HepG2 (cell line): ENCODE measurements at regions of chr7 and their contacts with region 1.

Region 1: DNA sequence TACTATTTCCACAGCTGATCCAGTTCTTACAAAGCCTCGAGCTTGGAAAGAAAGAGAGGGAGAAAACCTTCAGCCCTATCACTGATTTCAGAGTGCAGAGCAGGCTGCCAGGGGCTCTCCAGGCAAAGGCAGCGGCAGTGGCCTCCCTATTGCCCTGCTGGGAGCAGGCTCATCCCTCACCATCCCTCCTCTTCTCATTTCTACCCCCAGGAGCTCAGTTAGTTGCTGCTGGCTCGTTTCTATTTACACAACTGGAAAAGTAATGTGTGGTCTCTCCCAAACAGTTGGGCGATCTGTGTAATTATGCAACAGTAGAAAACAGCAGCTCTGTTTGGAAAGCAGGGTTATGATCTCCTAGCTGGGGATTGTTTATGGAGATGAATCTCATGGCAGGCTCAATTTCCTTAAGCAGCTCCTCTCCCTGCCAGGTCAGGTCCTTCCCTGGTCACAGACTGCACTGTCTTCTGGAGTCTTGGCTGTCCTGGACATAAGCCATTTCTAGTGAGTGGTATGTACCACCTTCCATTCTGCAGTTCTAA is 28.7 kb upstream of the TNS3 start:
- DNase-seq: peak; percentile 85
- ATAC-seq: peak; percentile 80
- H3K4me3 ChIP-seq: peak overlapping the region; percentile 34 to 59 (median 38)
- H3K27ac ChIP-seq: peak overlapping the region; percentile 71
- H3K4me1 ChIP-seq: peaks cover 61% of the 10 kb centered on the region
- H3K27me3 ChIP-seq: no peaks in the 10 kb centered on the region
- CTCF ChIP-seq: no peak
- EP300 ChIP-seq: peak in 1 of 2 experiments; percentile 60; a peak in 2 of 4 replicates
- POLR2A ChIP-seq: 0 out of 4 replicates have a peak, but pooled peaks of 1 of the 2 experiments have one; percentile 23
- RAD21 ChIP-seq: no peak

Region 2: GRCh38 chr7:47571331-47572093 is 39.1 kb before region 1 on chr7:
- CTCF ChIA-PET with region 1: no interaction called
- POLR2A ChIA-PET with region 1: interaction called, 25 read pairs
- in situ Hi-C with region 1: no loop called
- intact Hi-C with region 1: loop called (anchors 2 kb)
- DNase-seq: peak; percentile 90
- ATAC-seq: peak; percentile 70
- H3K4me3 ChIP-seq: peak overlapping the region; percentile 5 to 65 (median 43); a peak in 4 of 6 replicates
- H3K27ac ChIP-seq: peak overlapping the region; percentile 80
- H3K4me1 ChIP-seq: peaks cover 81% of the 10 kb centered on the region
- H3K27me3 ChIP-seq: no peaks in the 10 kb centered on the region
- CTCF ChIP-seq: 0 out of 2 replicates have a peak, but pooled peaks have one; percentile 3
- EP300 ChIP-seq: peak in 1 of 2 experiments; percentile 50; a peak in 2 of 4 replicates
- POLR2A ChIP-seq: peak; percentile 43 to 45
- RAD21 ChIP-seq: peak; percentile 30; the same call in 1 of the 2 replicates

Region 3: DNA sequence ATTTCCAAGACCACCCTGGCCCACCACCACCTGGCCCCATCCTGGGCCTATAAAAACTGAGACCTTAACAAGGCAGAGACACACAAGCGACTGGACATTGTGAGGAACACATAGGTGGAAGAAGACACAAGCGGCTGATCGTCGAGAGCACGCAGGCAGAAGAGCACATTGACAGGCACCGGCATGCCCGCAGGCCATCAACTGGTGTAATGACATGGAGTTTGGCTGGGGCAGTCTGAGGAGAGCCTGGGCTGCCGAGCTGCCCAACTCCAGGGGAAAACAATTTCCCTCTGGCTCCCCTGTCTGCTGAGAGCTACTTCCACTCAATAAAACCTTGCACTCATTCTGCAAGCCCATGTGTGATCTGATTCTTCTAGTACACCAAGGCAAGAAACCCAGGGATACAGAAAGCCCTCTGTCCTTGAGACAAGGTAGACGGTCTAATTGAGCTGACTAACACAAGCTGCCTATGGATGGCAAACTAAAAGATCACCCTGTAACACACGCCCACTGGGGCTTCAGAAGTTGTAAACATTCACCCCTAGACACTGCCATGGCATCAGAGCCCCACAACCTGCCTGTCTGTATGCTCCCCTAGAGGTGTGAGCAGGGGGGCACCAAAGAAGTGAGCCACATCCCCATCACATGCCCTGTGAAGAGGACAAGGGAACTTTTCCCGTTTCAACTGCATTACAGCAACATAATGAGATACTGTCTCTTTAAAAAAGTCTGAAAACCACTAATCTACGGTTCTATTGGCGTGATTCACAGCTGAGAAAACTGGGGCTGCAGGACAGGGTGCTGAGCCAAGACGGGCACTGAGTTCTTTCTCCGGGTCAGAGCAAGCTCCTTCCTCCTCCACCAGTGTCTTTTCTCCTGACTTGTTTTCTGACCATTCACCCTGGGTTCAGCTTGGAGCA is 10.1 kb before region 1 on chr7:
- CTCF ChIA-PET with region 1: no interaction called
- POLR2A ChIA-PET with region 1: interaction called, 20 read pairs
- in situ Hi-C with region 1: no loop called
- intact Hi-C with region 1: no loop called
- DNase-seq: no peak
- ATAC-seq: no peak
- H3K4me3 ChIP-seq: no peak overlapping the region
- H3K27ac ChIP-seq: no peak overlapping the region
- H3K4me1 ChIP-seq: peaks cover 72% of the 10 kb centered on the region
- H3K27me3 ChIP-seq: no peaks in the 10 kb centered on the region
- CTCF ChIP-seq: no peak
- EP300 ChIP-seq: no peak
- POLR2A ChIP-seq: no peak
- RAD21 ChIP-seq: no peak

Region 4: DNA sequence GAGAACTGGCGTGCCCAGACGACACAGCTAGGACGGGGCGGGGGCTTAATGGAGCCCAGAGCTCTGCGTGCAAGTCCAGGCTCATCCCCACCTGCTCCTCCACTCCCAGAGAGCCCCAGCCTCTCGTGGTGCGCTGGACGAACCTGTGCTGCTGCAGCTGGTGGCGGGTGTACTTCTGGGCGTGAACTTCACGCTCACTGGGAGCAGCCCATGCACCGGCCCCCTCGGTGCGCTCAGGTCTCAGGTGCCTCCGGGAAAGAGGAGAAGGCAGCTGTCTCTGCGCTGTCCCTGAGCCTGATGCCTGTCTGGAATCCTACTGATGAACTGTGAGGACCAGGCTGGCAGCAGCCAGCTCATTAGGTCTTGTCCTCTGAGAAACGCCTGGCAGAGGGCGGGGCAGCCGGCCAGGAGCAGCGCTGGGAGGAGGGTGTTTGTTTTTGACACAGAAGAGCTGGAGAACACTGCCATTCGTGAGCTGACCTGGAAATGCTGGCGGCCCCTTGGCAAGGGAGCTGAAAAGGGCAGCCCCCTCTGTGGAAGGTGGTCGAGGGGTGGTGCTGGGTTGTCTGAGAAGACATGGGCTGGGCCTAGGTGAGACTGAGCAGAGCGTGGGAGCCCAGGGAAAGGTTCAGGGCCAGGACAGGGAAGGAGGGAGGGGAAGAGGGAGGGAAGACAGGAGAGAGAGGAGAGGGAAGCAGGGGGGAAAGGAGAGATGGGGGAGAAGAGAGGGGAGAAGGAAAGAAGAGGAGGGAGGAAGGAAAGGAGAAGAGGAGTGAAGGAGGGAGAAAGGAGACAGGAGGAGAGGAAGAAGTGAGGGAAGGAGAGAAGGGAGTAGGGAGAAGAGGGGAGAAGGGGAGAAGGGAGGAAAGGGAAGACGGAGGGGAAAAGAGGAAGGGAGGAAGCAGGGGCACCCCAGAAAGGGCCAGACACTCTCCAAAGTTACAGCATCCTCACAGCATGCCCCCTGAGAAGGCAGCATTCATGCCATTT is 24.8 kb after region 1 on chr7:
- CTCF ChIA-PET with region 1: no interaction called
- POLR2A ChIA-PET with region 1: interaction called, 19 read pairs
- in situ Hi-C with region 1: no loop called
- intact Hi-C with region 1: loop called (anchors 2 kb)
- DNase-seq: peak; percentile 57
- ATAC-seq: peak; percentile 84
- H3K4me3 ChIP-seq: peak overlapping the region; percentile 52 to 74 (median 57)
- H3K27ac ChIP-seq: peak overlapping the region; percentile 7
- H3K4me1 ChIP-seq: peaks cover 66% of the 10 kb centered on the region
- H3K27me3 ChIP-seq: no peaks in the 10 kb centered on the region
- CTCF ChIP-seq: peak; percentile 16
- EP300 ChIP-seq: no peak
- POLR2A ChIP-seq: peak in 1 of 2 experiments; percentile 55; a peak in 2 of 4 replicates
- RAD21 ChIP-seq: 0 out of 2 replicates have a peak, but pooled peaks have one; percentile 39

Region 5: GRCh38 chr7:47786557-47787248 is 176.1 kb after region 1 on chr7:
- CTCF ChIA-PET with region 1: no interaction called
- POLR2A ChIA-PET with region 1: interaction called, 13 read pairs
- in situ Hi-C with region 1: no loop called
- intact Hi-C with region 1: no loop called
- DNase-seq: peak; percentile 97
- ATAC-seq: peak; percentile 95
- H3K4me3 ChIP-seq: peak overlapping the region in 2 of 3 experiments; percentile 27 to 28; a peak in 4 of 6 replicates
- H3K27ac ChIP-seq: peak overlapping the region; percentile 92
- H3K4me1 ChIP-seq: peaks cover 68% of the 10 kb centered on the region
- H3K27me3 ChIP-seq: no peaks in the 10 kb centered on the region
- CTCF ChIP-seq: no peak
- EP300 ChIP-seq: peak; percentile 16 to 87; a peak in 3 of 4 replicates
- POLR2A ChIP-seq: peak in 1 of 2 experiments; percentile 49; a peak in 2 of 4 replicates
- RAD21 ChIP-seq: peak; percentile 43; the same call in 1 of the 2 replicates